Activated CD4-positive, alpha-beta T cell treated with anti-CD3 and anti-CD28 coated beads for 36 hours (primary cell): ENCODE measurements at regions of chr7 and their contacts with region 1.

Region 1: DNA sequence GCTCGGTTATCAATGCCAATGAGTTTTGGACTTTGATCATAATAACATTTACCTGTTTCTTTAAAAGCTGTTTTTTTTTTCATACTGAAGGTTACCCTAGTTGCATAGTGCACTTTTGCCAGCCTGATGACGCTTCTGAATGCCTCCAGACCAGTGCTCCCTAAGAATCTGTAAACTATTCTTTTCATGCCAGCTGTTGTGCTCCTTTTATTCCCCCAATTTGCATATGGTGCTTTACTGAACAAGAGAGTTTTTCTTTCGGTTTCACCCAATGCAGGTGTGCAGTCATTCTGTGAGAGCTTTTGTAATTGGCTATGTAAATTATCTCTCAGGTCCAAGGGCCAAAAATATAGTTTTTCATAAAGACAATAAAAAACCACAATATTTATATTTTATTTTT is 48.1 kb upstream of the GLCCI1 start:
- DNase-seq: peak; percentile 30
- ATAC-seq: peak; percentile 91
- H3K4me3 Mint-ChIP-seq: peak overlapping the region; percentile 22
- H3K27ac Mint-ChIP-seq: no peak overlapping the region
- H3K4me1 Mint-ChIP-seq: peaks cover 34% of the 10 kb centered on the region
- H3K27me3 Mint-ChIP-seq: no peaks in the 10 kb centered on the region

Region 2: DNA sequence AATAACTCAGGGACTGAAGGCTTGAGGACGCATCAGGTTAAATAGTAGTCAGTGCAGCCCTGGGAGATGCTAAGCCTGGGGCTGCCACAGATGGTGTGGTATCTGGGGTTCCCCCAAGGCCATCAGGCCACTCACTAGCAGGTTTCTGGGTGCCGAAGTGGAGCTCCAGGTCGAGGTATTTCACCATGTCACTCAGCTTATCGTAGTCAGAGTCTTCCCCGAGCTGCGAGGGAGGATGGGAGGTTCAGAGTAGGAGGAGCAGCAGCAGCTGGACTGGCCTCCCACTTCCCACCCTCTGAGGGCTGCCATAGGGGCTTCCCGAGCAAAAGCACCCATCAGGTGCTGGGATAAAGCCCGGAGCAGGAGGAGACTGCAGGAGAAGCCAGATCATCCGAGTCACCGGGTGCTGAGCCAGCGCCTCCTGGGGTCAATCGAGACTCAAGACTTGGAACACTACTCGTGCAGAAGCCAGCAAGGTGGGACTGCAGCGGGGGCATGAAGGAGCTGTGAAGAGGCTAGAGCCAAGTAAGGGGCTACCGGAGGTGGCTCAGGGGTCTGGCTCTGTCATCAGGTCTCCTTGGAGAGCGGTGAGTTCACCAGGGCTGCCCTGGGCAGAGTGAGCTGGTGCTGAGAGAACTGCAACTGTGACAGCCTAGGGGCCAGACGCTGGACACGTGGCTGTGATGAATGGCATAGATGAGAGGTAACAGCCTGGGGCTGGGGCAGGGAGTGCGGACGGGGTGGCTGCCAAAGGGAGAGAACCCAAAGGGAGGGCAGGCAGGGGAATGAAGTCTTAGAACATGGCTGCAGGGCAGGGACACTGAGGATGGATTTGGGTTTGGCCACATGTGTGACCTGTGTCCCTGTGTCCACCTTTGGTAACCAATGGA is 1414.6 kb before region 1 on chr7:
- CTCF ChIA-PET with region 1: no interaction called
- POLR2A ChIA-PET with region 1: no interaction called
- intact Hi-C with region 1: no loop called
- DNase-seq: no peak
- ATAC-seq: no peak
- H3K4me3 Mint-ChIP-seq: no peak overlapping the region
- H3K27ac Mint-ChIP-seq: no peak overlapping the region
- H3K4me1 Mint-ChIP-seq: no peaks in the 10 kb centered on the region
- H3K27me3 Mint-ChIP-seq: no peaks in the 10 kb centered on the region

Region 3: DNA sequence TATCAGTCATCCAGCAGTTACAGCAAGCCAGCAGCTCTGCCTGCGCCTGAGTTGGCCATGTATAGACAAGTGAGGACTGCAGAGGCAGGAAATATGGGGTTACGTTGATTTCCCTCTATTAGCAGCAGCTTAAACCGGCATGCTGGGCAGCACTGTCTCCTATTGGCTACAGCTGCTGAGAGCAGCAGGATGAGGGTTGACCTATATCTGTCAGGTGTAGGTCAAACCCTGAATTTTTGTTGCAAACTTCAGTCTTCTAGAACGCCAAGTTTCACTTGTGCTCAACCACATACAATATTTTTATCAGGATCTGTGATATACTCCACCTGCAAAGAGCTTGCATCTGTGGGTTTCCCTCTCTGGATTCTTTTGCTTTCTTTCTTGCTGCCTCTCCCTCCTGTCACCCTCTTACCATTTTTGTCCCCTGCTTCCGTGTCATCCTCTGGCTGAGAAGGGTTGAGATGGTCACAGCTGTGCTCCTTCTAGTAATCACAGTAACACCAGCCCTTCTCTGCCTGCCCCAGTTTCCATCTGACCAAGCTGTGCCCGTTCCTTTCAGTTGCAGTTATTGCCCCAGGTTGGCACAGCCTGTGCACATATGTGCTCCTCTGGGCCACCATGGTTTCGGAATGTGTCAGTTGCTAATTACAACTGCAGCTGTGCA is 24.3 kb after region 1 on chr7:
- CTCF ChIA-PET with region 1: no interaction called
- POLR2A ChIA-PET with region 1: no interaction called
- intact Hi-C with region 1: loop called in 1 of 2 experiments (anchors 2 kb)
- DNase-seq: peak; percentile 79
- ATAC-seq: peak; percentile 94
- H3K4me3 Mint-ChIP-seq: peak overlapping the region; percentile 58
- H3K27ac Mint-ChIP-seq: peak overlapping the region; percentile 90
- H3K4me1 Mint-ChIP-seq: peaks cover 21% of the 10 kb centered on the region
- H3K27me3 Mint-ChIP-seq: no peaks in the 10 kb centered on the region

Region 4: GRCh38 chr7:8134089-8134733 is 213.7 kb after region 1 on chr7:
- CTCF ChIA-PET with region 1: no interaction called
- POLR2A ChIA-PET with region 1: no interaction called
- intact Hi-C with region 1: loop called in 1 of 2 experiments (anchors 1 kb)
- DNase-seq: peak; percentile 60
- ATAC-seq: peak; percentile 84
- H3K4me3 Mint-ChIP-seq: peak overlapping the region; percentile 22
- H3K27ac Mint-ChIP-seq: peak overlapping the region; percentile 79
- H3K4me1 Mint-ChIP-seq: peaks cover 56% of the 10 kb centered on the region
- H3K27me3 Mint-ChIP-seq: no peaks in the 10 kb centered on the region